Activated CD4-positive, alpha-beta T cell treated with anti-CD3 and anti-CD28 coated beads, Interleukin-2, amount 10 ng/mL, durations not matched to agents 24 days and 14 days (primary cell): ENCODE measurements at regions of chr15 and their contacts with region 1.

Region 1: DNA sequence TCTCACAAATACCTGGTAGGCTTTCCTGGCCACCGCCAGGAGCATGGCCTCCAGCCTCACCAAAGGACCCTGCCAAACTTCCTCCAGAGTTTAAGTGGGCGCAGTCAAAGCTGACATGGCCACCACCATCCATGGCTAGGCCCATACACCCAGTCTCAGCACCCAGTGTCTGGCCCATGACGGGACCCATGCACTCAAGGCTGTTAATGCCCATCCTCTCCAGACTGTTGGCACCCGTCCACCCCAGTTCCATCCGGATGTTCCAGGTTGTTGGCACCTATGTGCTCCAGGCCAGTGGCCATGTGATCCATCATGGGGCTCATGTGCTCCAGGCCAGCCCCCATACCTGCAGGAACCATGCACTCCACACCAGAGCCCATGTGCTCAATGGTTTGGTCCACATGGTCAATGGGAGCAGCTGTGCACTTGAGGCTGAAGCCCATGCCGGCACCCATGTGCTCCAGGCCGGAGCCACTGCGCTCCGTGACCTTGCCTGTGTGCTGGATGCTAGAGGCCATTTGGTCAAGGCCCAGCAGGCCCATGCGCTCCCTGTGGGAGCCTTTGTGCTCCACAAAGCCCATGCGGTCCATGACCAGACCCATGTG is 20.4 kb downstream of the CTDSPL2 start:
- DNase-seq: no peak
- H3K4me3 Mint-ChIP-seq: no peak overlapping the region
- H3K27ac Mint-ChIP-seq: no peak overlapping the region
- H3K4me1 Mint-ChIP-seq: peaks cover 10% of the 10 kb centered on the region
- H3K27me3 Mint-ChIP-seq: no peaks in the 10 kb centered on the region

Region 2: GRCh38 chr15:44435893-44436667 is 11.8 kb before region 1 on chr15:
- intact Hi-C with region 1: no loop called
- DNase-seq: no peak
- H3K4me3 Mint-ChIP-seq: no peak overlapping the region
- H3K27ac Mint-ChIP-seq: peak overlapping the region; percentile 21
- H3K4me1 Mint-ChIP-seq: peaks cover 31% of the 10 kb centered on the region
- H3K27me3 Mint-ChIP-seq: no peaks in the 10 kb centered on the region

Region 3: DNA sequence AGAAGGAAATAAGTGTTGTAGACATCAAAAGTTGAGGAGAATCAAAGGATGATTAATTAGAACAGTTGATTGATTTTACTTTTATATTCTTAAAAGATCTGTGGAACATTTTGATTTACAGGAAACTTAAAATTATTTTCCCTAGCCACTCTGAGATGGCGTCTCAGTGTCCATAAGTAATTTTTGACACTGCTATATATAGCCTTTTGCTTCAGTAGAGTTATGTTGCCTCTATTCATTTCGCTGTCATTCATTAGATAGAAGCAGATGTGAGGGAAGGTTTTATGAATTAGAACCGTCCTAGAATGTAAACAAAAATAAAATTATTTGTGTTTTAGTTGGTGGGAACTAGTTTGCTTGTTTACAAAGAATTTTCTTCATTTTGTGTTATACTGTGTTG is 38.0 kb after region 1 on chr15:
- intact Hi-C with region 1: loop called (anchors 2 kb)
- DNase-seq: no peak
- H3K4me3 Mint-ChIP-seq: no peak overlapping the region
- H3K27ac Mint-ChIP-seq: no peak overlapping the region
- H3K4me1 Mint-ChIP-seq: peaks cover 18% of the 10 kb centered on the region
- H3K27me3 Mint-ChIP-seq: no peaks in the 10 kb centered on the region